CD8-positive, alpha-beta T cell (primary cell): ENCODE measurements at regions of chr5 and their contacts with region 1.

Region 1: DNA sequence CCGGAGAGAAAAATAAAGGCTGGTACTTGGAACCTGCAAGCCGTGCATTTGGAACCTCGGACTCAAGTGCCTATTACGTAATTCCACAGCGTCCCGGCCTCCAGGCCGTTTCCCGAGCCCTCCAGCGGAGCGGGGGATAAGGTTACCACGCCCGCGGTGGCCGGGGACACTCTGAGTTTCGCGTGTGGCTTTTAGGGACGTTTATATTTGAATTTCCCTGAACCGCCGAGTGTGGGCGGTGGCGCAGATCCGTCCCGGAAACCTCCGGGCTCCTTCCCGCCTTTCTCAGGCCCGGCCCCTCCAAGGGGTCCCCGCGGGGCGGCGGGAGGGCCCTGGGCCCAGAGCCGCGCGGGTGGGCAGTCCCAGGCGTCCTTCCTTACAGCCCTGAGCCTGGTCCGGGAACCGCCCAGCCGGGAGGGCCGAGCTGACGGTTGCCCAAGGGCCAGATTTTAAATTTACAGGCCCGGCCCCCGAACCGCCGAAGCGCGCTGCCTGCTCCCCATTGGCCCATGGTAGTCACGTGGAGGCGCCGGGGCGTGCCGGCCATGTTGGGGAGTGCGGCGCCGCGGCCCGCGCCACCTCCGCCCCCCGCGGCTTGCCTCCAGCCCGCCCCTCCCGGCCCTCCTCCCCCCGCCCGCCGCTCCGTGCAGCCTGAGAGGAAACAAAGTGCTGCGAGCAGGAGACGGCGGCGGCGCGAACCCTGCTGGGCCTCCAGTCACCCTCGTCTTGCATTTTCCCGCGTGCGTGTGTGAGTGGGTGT is at the start of gene LMNB1:
- DNase-seq: peak; percentile 89 to 96 (median 92)
- ATAC-seq: peak; percentile 68
- H3K4me3 ChIP-seq: peak within 1 kb of the TSS; percentile 87 to 97
- H3K4me3 Mint-ChIP-seq: peak within 1 kb of the TSS; percentile 94
- H3K27ac ChIP-seq: peak within 1 kb of the TSS; percentile 83 to 92
- H3K27ac Mint-ChIP-seq: peak within 1 kb of the TSS; percentile 96
- H3K4me1 ChIP-seq: peaks cover 28% of the 10 kb centered on the region
- H3K4me1 Mint-ChIP-seq: peaks cover 30% of the 10 kb centered on the region
- H3K27me3 ChIP-seq: no peaks in the 10 kb centered on the region
- H3K27me3 Mint-ChIP-seq: no peaks in the 10 kb centered on the region
- CTCF ChIP-seq: no peak
- total RNA-seq, gene LMNB1: 25.8 to 30.6 TPM

Region 2: DNA sequence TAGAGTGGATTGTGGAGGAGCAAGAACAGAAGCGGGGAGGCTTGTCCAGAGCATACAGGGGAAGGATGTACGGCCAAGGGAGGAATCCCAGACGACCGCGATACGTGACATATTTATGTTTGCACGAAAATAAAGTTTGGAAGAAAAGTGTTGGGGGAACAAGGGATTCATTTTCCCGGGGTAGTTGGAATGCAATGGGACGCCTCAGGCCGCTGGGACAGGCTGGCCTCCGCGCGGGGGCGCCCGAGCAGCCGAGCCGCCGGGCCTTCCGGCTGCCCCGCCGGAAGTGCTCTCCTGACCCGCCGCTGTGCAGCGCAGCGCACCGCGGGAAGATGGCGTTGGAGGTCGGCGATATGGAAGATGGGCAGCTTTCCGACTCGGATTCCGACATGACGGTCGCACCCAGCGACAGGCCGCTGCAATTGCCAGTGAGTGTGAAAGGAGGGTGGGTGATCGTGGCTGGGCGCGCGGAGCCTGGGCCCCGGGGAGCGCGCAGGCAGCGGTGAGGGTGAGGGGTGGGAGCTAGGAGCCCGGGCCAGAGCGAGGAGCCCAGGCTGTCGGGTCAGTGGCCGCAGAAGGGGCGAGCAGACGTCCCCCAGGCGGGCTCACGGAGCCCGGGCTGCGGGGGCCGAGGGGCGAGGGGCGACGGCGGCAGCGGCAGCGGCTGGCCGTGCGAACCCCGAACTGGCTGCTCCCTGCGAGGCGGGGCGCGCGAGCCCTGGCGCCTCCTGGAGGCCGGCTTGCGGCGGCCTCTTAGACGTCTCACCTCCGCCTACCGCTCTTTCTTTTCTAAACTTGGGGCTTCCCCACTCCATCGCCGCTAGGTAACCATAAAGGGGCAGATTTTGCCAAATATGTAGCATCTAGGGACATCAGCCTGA is 175.8 kb before region 1 on chr5 and contains the start of gene PHAX:
- CTCF ChIA-PET with region 1: interaction called, 8 read pairs
- POLR2A ChIA-PET with region 1: interaction called, 12 read pairs
- intact Hi-C with region 1: loop called (anchors 2 kb)
- DNase-seq: peak; percentile 47 to 87 (median 70)
- ATAC-seq: peak; percentile 94
- H3K4me3 ChIP-seq: peak within 1 kb of the TSS; percentile 88 to 98
- H3K4me3 Mint-ChIP-seq: peak within 1 kb of the TSS; percentile 98
- H3K27ac ChIP-seq: peak within 1 kb of the TSS; percentile 83 to 85
- H3K27ac Mint-ChIP-seq: peak within 1 kb of the TSS; percentile 96
- H3K4me1 ChIP-seq: peaks cover 29% of the 10 kb centered on the region
- H3K4me1 Mint-ChIP-seq: peaks cover 33% of the 10 kb centered on the region
- H3K27me3 ChIP-seq: no peaks in the 10 kb centered on the region
- H3K27me3 Mint-ChIP-seq: no peaks in the 10 kb centered on the region
- CTCF ChIP-seq: peak; percentile 66
- total RNA-seq, gene PHAX: 29.4 to 32.8 TPM

Region 3: GRCh38 chr5:126745259-126745992 is 31.3 kb before region 1 on chr5:
- CTCF ChIA-PET with region 1: interaction called, 4 read pairs
- POLR2A ChIA-PET with region 1: interaction called, 6 read pairs
- intact Hi-C with region 1: loop called (anchors 1 kb)
- DNase-seq: no peak
- ATAC-seq: no peak
- H3K4me3 ChIP-seq: no peak overlapping the region
- H3K4me3 Mint-ChIP-seq: no peak overlapping the region
- H3K27ac ChIP-seq: no peak overlapping the region
- H3K27ac Mint-ChIP-seq: no peak overlapping the region
- H3K4me1 ChIP-seq: peaks cover 11% of the 10 kb centered on the region
- H3K4me1 Mint-ChIP-seq: peaks cover 17% of the 10 kb centered on the region
- H3K27me3 ChIP-seq: no peaks in the 10 kb centered on the region
- H3K27me3 Mint-ChIP-seq: no peaks in the 10 kb centered on the region
- CTCF ChIP-seq: no peak

Region 4: DNA sequence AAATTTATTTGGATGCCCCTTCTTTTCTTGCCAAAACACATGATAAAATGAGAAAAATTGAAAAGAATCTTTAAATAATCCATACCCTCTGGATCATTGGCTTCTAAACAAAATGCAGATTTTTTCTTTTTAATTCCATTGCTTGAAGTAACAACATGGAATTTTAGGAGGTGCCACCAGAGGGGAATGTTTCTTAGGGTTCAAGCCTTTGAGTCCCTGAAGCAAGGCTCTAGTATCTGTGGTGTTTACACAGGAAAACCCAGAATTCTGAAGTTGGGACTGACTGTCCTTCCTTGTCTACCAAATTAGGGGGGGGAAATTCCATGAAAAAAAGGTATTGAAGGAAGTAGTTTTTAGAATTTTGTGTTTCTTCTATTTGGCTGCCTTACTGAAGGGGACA is 69.7 kb after region 1 on chr5:
- CTCF ChIA-PET with region 1: interaction called, 15 read pairs
- POLR2A ChIA-PET with region 1: interaction called, 82 read pairs
- intact Hi-C with region 1: loop called in 1 of 2 experiments (anchors 5 kb)
- DNase-seq: no peak
- ATAC-seq: no peak
- H3K4me3 ChIP-seq: no peak overlapping the region
- H3K4me3 Mint-ChIP-seq: no peak overlapping the region
- H3K27ac ChIP-seq: peak overlapping the region in 1 of 2 experiments; percentile 63
- H3K27ac Mint-ChIP-seq: peak overlapping the region; percentile 95
- H3K4me1 ChIP-seq: peaks cover 19% of the 10 kb centered on the region
- H3K4me1 Mint-ChIP-seq: peaks cover 51% of the 10 kb centered on the region
- H3K27me3 ChIP-seq: no peaks in the 10 kb centered on the region
- H3K27me3 Mint-ChIP-seq: no peaks in the 10 kb centered on the region
- CTCF ChIP-seq: no peak

Region 5: DNA sequence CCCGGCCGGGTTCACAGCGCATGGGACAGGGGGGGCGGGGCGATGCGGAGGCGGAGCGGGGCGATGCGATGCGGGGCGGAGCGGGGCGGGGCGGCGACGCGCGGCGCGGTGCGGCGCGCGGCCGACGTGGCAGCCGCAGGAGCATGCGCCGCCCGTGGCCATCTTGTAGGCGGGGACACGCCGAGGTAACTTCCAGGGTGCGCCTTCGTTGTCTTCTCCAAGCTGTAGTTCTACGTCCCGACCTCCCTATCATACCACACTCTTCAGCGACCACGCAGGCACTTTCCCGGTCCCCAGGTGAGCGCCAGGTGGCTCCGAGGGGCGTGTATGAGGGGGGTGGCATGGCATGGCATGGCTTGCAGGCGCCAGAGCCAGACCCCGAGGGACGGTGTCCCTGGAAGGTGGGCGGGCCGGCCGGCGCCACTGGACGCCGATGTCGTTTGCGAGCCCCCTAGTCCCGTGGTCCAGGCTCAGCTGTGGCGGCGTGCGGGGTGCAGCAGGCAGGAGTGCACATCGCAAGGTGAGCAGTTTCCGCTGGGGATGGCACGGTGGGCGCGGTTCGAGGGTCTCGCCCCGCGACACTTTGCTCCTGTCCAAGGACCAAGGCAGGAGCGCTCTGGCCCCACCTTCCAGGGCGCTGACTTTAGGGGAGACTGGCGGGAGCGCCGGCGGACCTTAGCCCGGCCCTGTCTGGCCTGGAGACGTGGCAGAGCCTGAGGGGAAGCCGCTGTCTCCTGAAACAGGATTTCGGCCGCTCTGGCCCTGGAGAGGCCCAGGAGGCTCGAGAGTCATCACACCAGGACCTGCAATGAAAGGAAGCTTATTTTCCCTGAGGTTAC is 741.0 kb after region 1 on chr5 and contains the start of gene PRRC1:
- CTCF ChIA-PET with region 1: no interaction called
- POLR2A ChIA-PET with region 1: no interaction called
- intact Hi-C with region 1: loop called (anchors 2 kb)
- DNase-seq: peak; percentile 53 to 90 (median 81)
- ATAC-seq: peak; percentile 96
- H3K4me3 ChIP-seq: peak within 1 kb of the TSS; percentile 91 to 98
- H3K4me3 Mint-ChIP-seq: peak within 1 kb of the TSS; percentile 90
- H3K27ac ChIP-seq: peak within 1 kb of the TSS; percentile 75 to 76
- H3K27ac Mint-ChIP-seq: peak within 1 kb of the TSS; percentile 80
- H3K4me1 ChIP-seq: peaks cover 11% of the 10 kb centered on the region
- H3K4me1 Mint-ChIP-seq: peaks cover 37% of the 10 kb centered on the region
- H3K27me3 ChIP-seq: no peaks in the 10 kb centered on the region
- H3K27me3 Mint-ChIP-seq: peaks cover 8% of the 10 kb centered on the region
- CTCF ChIP-seq: no peak
- total RNA-seq, gene PRRC1: 30.4 to 37.3 TPM